ENCODE measurements at regions of chr16 and their contacts with region 1.

Region 1: DNA sequence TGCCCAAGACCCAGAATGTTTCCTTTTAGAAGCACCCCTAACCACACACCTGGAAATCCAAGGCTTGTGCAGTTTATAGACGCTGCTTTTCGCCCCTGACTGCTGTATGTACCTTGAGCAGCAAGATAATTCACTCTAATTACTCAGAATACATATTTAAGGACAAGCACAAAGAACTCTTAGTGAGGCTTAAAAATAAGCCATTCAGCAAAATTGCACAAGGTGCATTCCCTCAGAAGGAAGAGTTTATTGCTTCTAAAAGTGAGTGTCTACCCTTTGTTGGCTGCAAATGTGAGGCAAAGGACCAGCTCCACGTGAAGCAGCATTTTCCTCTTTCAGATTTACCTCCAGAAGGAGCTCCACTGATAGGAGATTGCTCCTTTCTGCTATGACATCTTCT is 208.4 kb downstream of the RBFOX1 start:
- DNase-seq: no peak
- H3K4me3 ChIP-seq: no peak overlapping the region
- H3K27ac ChIP-seq: no peak overlapping the region
- H3K4me1 ChIP-seq: no peaks in the 10 kb centered on the region
- H3K27me3 ChIP-seq: no peaks in the 10 kb centered on the region
- CTCF ChIP-seq: no peak
- EP300 ChIP-seq: no peak
- POLR2A ChIP-seq: no peak

Region 2: GRCh38 chr16:7268182-7268581 is 272.8 kb before region 1 on chr16:
- in situ Hi-C with region 1: no loop called
- intact Hi-C with region 1: loop called (anchors 5 kb)
- DNase-seq: no peak
- H3K4me3 ChIP-seq: no peak overlapping the region
- H3K27ac ChIP-seq: no peak overlapping the region
- H3K4me1 ChIP-seq: no peaks in the 10 kb centered on the region
- H3K27me3 ChIP-seq: no peaks in the 10 kb centered on the region
- CTCF ChIP-seq: peak; percentile 26 to 58 (median 36)
- EP300 ChIP-seq: no peak
- POLR2A ChIP-seq: no peak

Measured in transverse colon (tissue), 4 donors.